Natural killer cell (primary cell): ENCODE measurements at regions of chr20 and their contacts with region 1.

Region 1: DNA sequence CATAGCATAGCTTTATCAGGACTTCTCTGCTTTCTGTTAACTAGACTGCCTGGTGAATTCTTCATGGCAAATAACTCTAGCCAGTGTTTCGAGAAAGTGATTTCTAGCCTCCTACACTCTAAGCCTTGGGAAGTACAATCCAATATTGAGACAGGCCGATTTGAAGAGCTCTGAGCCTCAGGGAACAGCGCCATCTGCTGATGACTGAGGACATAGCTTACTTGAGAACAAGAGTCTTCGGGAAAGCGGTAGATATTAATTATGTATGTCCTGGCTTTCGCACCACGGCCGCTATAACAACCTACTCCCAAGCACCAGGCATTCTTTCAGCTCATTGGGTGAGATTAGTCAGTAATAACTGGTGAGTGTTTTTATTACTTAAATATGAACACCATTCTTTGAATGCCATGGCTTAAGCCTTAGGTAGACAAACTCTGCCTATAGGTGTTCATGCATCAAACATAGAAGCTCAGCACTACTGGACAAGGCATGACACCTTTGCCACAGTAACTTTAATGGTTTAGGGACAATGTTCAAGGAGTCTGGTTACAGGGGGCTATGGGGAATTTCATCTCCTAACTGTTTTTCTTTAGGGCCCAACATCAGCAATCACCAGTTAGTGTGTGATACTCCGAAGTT is 518.6 kb downstream of the BMP2 start:
- DNase-seq: peak in 1 of 2 donors; percentile 14
- ATAC-seq: peak in 1 of 3 donors; percentile 34
- H3K4me3 ChIP-seq: no peak overlapping the region
- H3K4me3 Mint-ChIP-seq: no peak overlapping the region
- H3K27ac ChIP-seq: no peak overlapping the region
- H3K27ac Mint-ChIP-seq: no peak overlapping the region
- H3K4me1 ChIP-seq: no peaks in the 10 kb centered on the region
- H3K4me1 Mint-ChIP-seq: no peaks in the 10 kb centered on the region
- H3K27me3 ChIP-seq: no peaks in the 10 kb centered on the region
- H3K27me3 Mint-ChIP-seq: no peaks in the 10 kb centered on the region
- CTCF ChIP-seq: peak; percentile 50

Region 2: GRCh38 chr20:6142348-6142993 is 1143.6 kb before region 1 on chr20:
- intact Hi-C with region 1: loop called (anchors 5 kb)
- DNase-seq: peak in 1 of 2 donors; percentile 75
- ATAC-seq: peak in 2 of 3 donors; percentile 68 to 77
- H3K4me3 ChIP-seq: no peak overlapping the region
- H3K4me3 Mint-ChIP-seq: no peak overlapping the region
- H3K27ac ChIP-seq: no peak overlapping the region
- H3K27ac Mint-ChIP-seq: no peak overlapping the region
- H3K4me1 ChIP-seq: no peaks in the 10 kb centered on the region
- H3K4me1 Mint-ChIP-seq: no peaks in the 10 kb centered on the region
- H3K27me3 ChIP-seq: no peaks in the 10 kb centered on the region
- H3K27me3 Mint-ChIP-seq: peaks cover 1 to 6% of the 10 kb centered on the region in 2 donors
- CTCF ChIP-seq: peak; percentile 91

Region 3: DNA sequence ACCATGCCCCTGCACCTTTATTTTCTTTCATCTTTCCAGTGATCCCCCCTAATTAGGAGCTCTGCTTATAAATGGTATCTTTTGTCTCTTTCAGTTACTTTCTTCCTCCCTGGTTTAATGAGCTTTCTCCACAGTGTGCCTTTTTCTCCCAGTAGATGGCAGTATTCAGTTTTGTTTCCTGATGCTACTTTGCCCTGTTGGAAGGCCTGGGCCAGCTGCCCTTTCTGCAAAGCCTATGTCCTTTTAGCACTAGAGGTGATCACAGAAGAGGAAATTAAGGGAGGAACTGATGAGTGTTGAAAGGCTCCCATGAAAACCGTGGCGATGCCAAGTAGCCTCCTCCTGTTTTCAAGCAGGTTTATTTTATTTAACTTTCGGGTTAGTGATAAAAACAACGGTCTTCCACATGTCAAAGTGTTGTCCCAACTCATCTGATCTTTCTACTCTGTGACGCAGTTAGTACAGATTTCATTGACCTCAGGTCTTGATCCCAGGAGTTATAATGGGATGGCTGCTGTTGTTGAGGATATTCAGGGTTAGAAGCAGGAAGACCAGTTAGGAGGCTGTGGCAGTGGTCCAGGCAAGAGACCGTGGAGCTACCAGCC is 702.8 kb before region 1 on chr20:
- intact Hi-C with region 1: loop called (anchors 5 kb)
- DNase-seq: no peak
- ATAC-seq: peak in 2 of 3 donors; percentile 36 to 65
- H3K4me3 ChIP-seq: no peak overlapping the region
- H3K4me3 Mint-ChIP-seq: no peak overlapping the region
- H3K27ac ChIP-seq: no peak overlapping the region
- H3K27ac Mint-ChIP-seq: no peak overlapping the region
- H3K4me1 ChIP-seq: no peaks in the 10 kb centered on the region
- H3K4me1 Mint-ChIP-seq: no peaks in the 10 kb centered on the region
- H3K27me3 ChIP-seq: no peaks in the 10 kb centered on the region
- H3K27me3 Mint-ChIP-seq: peaks cover 3 to 10% of the 10 kb centered on the region in 2 donors
- CTCF ChIP-seq: peak; percentile 45

Region 4: DNA sequence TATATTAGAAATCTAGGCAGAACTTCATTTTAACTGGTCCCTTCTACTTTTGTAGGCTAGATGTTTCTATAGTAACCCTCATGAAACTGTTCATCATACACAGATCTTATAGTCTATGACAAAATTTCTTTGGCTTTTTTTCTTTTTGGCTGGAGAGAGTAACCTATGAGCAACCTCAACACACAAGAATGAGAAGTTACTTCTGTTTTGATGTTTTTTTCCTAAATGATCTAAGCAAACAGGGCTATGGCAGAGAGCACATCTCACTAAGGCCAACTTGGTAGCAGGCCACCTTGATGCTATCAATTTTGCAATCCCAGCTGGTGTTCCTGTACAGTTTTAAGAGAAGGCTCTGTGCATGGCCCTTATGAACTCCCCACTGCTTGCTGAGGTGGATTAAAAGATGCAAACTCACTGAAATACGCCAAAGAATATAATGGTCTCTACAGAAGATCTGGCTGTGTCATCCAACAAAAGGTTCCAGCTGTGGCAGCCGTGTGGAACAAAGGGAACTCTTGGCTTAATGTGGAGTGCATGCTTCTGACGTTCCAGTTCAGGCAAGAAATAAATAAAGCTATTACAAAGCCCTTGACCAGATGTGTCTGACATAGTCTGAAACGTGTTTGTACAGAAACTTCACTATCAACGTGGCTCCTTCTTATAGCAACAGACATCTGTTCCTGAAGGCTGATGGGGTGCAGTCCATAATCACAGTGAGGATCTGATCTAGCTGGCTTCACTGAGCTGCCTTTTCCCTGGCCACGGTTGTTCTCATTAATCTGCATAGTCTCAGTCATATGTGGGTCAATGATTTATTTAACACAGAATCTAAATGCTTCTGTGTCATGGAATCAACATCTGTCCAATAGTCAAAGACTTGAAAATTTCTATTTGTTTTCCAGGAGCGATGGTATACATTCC is 37.5 kb before region 1 on chr20:
- intact Hi-C with region 1: no loop called
- DNase-seq: no peak
- ATAC-seq: no peak
- H3K4me3 ChIP-seq: no peak overlapping the region
- H3K4me3 Mint-ChIP-seq: no peak overlapping the region
- H3K27ac ChIP-seq: no peak overlapping the region
- H3K27ac Mint-ChIP-seq: no peak overlapping the region
- H3K4me1 ChIP-seq: no peaks in the 10 kb centered on the region
- H3K4me1 Mint-ChIP-seq: no peaks in the 10 kb centered on the region
- H3K27me3 ChIP-seq: no peaks in the 10 kb centered on the region
- H3K27me3 Mint-ChIP-seq: no peaks in the 10 kb centered on the region
- CTCF ChIP-seq: no peak